ENCODE measurements at regions of chr21 and their contacts with region 1.

Region 1: GRCh38 chr21:43810505-43811261 is 21.3 kb downstream of the RRP1 start:
- DNase-seq: peak; percentile 96
- ATAC-seq: peak; percentile 91
- H3K4me3 ChIP-seq: peak overlapping the region; percentile 39
- H3K27ac ChIP-seq: no peak overlapping the region
- H3K4me1 ChIP-seq: peaks cover 20% of the 10 kb centered on the region
- H3K27me3 ChIP-seq: no peaks in the 10 kb centered on the region
- CTCF ChIP-seq: peak; percentile 97

Region 2: DNA sequence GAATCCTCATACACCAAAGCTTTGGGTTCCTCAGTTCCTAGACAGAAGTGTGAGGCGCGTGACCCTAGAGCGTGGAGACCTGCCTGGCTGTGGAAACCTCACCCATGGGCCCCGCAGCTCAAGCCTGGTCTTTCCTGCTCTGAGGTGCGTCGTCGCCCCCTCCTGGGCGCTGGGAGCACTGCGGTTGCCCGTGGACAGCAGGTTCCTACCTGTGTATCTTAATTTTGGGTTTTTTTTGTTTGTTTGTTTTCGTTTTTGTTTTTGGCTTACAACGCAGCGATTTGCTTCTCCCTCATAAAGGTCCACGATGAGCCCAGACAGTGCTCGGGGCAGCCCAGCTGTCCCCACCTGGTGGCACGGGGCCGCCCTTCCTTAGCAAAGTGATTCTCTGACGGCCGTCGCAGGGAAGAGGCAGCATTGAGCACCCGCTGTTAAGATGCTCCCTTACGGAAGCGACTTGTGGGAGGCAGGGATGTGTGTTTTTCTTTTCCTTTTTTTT is 164.9 kb after region 1 on chr21:
- intact Hi-C with region 1: loop called (anchors 5 kb)
- DNase-seq: peak; percentile 89
- ATAC-seq: peak; percentile 87
- H3K4me3 ChIP-seq: no peak overlapping the region
- H3K27ac ChIP-seq: no peak overlapping the region
- H3K4me1 ChIP-seq: peaks cover 14% of the 10 kb centered on the region
- H3K27me3 ChIP-seq: no peaks in the 10 kb centered on the region
- CTCF ChIP-seq: peak; percentile 89